ENCODE measurements at regions of chr4 and their contacts with region 1.

Region 1: GRCh38 chr4:8050555-8051206 is 107.9 kb downstream of the ABLIM2 start:
- DNase-seq: peak; percentile 85 to 92 (median 88)
- ATAC-seq: peak; percentile 80 to 92 (median 91)
- H3K4me3 ChIP-seq: peak overlapping the region in 7 of 12 donors; percentile 9 to 35 (median 30)
- H3K27ac ChIP-seq: peak overlapping the region; percentile 73 to 93 (median 84)
- H3K4me1 ChIP-seq: peaks cover 4 to 24% (median 14%) of the 10 kb centered on the region in 12 donors
- H3K27me3 ChIP-seq: no peaks in the 10 kb centered on the region
- CTCF ChIP-seq: no peak
- POLR2A ChIP-seq: no peak

Region 2: DNA sequence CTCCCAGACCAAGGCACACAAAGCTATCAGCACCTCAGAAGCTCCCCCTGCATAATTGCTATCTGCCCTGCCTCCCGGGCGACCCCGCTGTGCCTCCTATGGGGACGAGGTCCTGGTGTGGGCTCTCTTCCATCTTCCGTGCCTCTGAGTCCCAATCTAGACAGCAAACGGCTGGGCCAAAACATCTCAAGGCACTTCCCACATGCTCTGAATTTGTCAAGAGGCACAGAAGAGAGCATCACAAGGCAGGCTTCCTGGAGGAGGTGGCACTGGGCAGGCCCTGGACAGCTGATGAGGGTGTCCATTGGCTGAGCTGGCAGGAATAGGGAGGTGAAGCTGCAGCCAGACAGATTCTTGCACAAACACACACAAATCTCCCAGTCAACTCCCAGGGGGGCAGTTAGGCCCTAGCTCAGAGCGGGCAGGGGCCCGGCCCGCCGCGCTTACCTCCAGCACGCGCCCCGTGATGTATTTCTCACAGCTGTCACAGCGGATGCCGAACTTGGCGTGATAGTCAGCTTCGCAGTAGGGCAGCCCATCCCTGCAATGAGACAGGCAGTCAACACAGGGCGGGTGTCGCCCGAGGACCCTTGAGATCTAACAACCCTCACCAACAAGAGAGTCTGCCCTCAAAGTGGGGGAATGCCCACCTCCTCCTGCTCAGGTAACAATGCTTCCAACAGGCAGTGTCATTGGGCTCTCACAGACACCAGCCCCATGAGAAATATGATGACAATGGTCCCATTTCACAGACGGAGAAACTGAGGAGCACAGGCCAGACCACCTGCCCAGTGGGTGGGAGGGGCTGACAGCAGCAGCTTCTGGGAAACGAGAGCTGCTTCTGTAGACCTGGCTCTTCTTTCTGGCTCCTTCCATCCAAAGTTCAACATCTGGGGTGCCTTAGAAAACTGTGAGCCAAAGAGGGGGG is 26.8 kb after region 1 on chr4:
- intact Hi-C with region 1: loop called in 1 of 10 experiments (anchors 2 kb)
- DNase-seq: peak in 2 of 5 donors; percentile 18 to 54
- ATAC-seq: no peak
- H3K4me3 ChIP-seq: no peak overlapping the region
- H3K27ac ChIP-seq: no peak overlapping the region
- H3K4me1 ChIP-seq: peaks cover 0 to 30% (median 11%) of the 10 kb centered on the region in 12 donors
- H3K27me3 ChIP-seq: no peaks in the 10 kb centered on the region
- CTCF ChIP-seq: no peak
- POLR2A ChIP-seq: no peak

Region 3: GRCh38 chr4:8144359-8144758 is 93.7 kb after region 1 on chr4:
- intact Hi-C with region 1: loop called in 2 of 10 experiments (anchors 5 to 10 kb)
- DNase-seq: no peak
- ATAC-seq: peak; percentile 1 to 52 (median 16)
- H3K4me3 ChIP-seq: no peak overlapping the region
- H3K27ac ChIP-seq: peak overlapping the region; percentile 40 to 90 (median 76)
- H3K4me1 ChIP-seq: peaks cover 0 to 59% (median 27%) of the 10 kb centered on the region in 12 donors
- H3K27me3 ChIP-seq: no peaks in the 10 kb centered on the region
- CTCF ChIP-seq: no peak
- POLR2A ChIP-seq: no peak

Region 4: DNA sequence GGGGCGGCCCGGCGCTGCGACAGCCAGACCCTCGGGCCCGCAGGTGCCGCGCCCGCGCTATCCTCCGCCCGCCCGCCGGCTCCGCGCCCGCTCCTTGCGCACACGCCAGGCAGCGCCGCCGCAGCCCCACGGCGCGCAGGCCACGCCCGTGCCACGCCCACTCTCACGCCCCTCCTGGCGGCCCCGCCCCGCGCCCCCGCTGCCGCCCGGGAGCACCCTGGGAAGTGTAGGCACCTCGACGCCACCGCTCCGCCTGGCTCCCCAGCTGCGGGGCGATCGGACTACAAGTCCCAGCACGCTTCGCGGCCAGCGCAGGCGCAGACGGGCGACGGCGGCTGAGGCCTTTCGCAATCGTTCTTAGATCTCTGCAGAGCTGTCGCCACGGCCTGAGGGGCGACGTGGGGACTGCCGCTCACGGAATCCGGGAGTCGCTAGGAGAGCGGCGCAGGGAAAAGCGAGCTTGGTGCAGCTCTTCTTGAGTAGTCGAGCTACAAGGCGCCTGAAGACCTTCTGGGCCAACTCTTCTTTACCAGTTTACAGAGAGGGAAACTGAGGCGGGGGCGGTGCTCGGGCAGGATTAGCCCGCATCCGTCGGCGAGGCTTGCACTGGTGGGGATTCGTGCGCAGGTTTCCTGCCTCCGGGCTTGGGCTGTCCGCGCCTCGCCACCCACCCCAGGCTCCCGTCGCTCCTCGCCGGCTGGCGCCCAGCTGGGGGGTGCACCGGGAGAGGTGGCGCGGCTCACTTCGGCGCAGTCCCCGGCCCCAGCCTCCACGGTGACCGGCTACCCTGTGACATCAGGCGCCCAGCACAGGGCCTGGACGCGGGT is 108.2 kb after region 1 on chr4 and contains the start of gene ABLIM2:
- intact Hi-C with region 1: loop called in 1 of 10 experiments (anchors 5 kb)
- DNase-seq: peak; percentile 98 to 100 (median 98)
- ATAC-seq: peak; percentile 97 to 98 (median 98)
- H3K4me3 ChIP-seq: peak within 1 kb of the TSS; percentile 63 to 99 (median 74)
- H3K27ac ChIP-seq: peak within 1 kb of the TSS in 11 of 12 donors; percentile 46 to 91 (median 74)
- H3K4me1 ChIP-seq: peaks cover 5 to 35% (median 21%) of the 10 kb centered on the region in 12 donors
- H3K27me3 ChIP-seq: peaks cover 0 to 14% (median 2%) of the 10 kb centered on the region in 9 donors
- CTCF ChIP-seq: peak in 1 of 12 donors; percentile 11
- POLR2A ChIP-seq: peak; percentile 14 to 89
- total RNA-seq, gene ABLIM2: 14.3 to 25.8 (median 18.4) TPM

Measured in heart left ventricle (tissue), 16 donors.